CD8-positive, alpha-beta memory T cell (primary cell): ENCODE measurements at regions of chr12 and their contacts with region 1.

Region 1: DNA sequence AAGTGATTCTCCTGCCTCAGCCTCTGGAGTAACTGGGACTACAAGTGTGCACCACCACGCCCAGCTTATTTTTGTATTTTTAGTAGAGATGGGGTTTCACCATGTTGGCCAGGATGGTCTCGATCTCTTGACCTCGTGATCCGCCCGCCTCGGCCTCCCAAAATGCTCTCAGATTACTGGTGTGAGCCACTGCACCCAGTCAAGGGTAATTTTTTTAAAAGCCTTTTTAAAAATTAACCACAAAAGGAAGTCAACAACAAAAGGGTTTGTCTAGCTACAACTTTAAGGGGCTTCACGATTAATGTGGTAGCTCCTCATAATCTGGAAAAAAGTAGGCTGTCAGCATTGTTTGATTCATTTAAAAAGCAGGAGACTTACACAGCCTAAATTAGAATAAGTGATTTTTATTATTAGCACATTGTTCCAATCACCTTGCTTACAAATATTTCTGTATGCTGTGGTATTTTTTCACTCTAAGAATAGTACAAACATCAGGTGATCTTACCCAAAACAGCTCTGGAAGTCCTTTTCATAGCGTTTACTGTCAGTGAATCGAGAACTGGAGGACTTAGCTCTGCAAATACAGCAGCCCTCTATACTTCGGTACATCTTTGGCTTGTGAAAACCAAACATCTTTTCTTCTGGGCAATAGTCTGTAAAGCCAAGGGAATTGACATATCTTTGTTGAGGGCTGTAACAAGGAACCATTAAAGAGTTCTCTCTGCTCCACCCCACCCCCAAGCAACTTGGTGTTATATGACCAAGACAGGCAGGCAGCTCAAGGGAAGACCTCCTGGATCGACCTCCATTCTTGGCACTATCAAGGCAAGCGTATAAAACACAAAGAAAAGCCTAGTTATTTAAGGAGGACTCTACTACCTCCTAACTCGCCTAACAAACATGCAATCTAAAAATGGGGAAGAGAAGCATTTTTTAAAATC is 28.1 kb downstream of the SINHCAF start:
- DNase-seq: no peak
- H3K4me3 ChIP-seq: no peak overlapping the region
- H3K4me3 Mint-ChIP-seq: no peak overlapping the region
- H3K27ac ChIP-seq: no peak overlapping the region
- H3K27ac Mint-ChIP-seq: peak overlapping the region in 6 of 8 donors; percentile 10 to 80 (median 46)
- H3K4me1 ChIP-seq: no peaks in the 10 kb centered on the region
- H3K4me1 Mint-ChIP-seq: peaks cover 24 to 49% (median 42%) of the 10 kb centered on the region in 3 donors
- H3K27me3 ChIP-seq: no peaks in the 10 kb centered on the region
- H3K27me3 Mint-ChIP-seq: no peaks in the 10 kb centered on the region

Region 2: GRCh38 chr12:31324116-31324844 is 26.4 kb after region 1 on chr12:
- CTCF ChIA-PET with region 1: no interaction called
- POLR2A ChIA-PET with region 1: interaction called, 13 read pairs
- DNase-seq: peak; percentile 61 to 92 (median 85)
- H3K4me3 ChIP-seq: peak overlapping the region; percentile 81
- H3K4me3 Mint-ChIP-seq: peak overlapping the region; percentile 89 to 100 (median 98)
- H3K27ac ChIP-seq: peak overlapping the region; percentile 91
- H3K27ac Mint-ChIP-seq: peak overlapping the region; percentile 89 to 99 (median 97)
- H3K4me1 ChIP-seq: peaks cover 38% of the 10 kb centered on the region
- H3K4me1 Mint-ChIP-seq: peaks cover 47 to 63% (median 61%) of the 10 kb centered on the region in 3 donors
- H3K27me3 ChIP-seq: no peaks in the 10 kb centered on the region
- H3K27me3 Mint-ChIP-seq: peaks cover 0 to 4% of the 10 kb centered on the region in 2 donors